ENCODE measurements at regions of chr18 and their contacts with region 1.

Region 1: GRCh38 chr18:62729487-62730386 is 14.4 kb downstream of the PHLPP1 start:
- DNase-seq: no peak
- ATAC-seq: no peak
- H3K4me3 ChIP-seq: no peak overlapping the region
- H3K27ac ChIP-seq: no peak overlapping the region
- H3K4me1 ChIP-seq: no peaks in the 10 kb centered on the region
- H3K27me3 ChIP-seq: no peaks in the 10 kb centered on the region
- CTCF ChIP-seq: no peak

Region 2: DNA sequence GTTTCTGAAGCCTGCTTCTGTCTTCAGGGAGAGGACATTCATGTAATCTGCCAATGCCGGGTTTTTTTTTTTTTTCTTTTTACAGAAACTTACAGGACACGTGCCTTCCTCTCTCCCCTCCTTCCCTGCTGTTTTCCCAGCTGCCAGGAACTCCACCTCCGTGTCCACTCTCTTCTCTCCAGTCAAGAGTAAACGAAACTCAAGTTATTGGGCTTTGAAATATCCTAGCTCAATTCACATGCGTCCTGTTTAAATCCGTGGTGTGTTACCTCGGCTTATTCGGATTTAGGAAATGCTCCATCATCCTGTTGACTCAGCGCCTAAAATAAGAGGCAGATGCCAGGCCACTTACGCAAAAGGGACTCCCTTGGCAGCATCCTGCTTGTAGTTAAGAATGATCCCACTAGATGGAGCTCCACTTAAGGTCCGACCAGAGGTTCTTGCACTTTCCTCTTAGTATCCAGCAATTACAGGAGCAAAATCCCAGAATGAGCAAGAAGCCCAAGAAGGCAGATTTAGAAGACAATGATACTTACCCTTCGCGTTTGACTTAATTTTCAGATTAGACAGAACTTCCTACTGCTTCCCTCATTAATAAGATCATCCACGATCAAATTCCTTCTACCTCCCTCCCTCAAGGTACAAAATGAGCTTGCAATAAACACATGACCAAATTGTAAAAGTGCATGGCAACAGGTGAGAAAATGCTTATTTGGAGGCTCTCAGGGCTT is 304.1 kb before region 1 on chr18:
- intact Hi-C with region 1: no loop called
- DNase-seq: peak in 4 of 6 donors; percentile 47 to 89 (median 76)
- ATAC-seq: peak; percentile 88 to 96 (median 96)
- H3K4me3 ChIP-seq: peak overlapping the region in 2 of 4 donors; percentile 5 to 33
- H3K27ac ChIP-seq: peak overlapping the region in 2 of 4 donors; percentile 59 to 61
- H3K4me1 ChIP-seq: peaks cover 0 to 15% (median 0%) of the 10 kb centered on the region in 3 donors
- H3K27me3 ChIP-seq: no peaks in the 10 kb centered on the region
- CTCF ChIP-seq: peak; percentile 65 to 83 (median 72)

Region 3: DNA sequence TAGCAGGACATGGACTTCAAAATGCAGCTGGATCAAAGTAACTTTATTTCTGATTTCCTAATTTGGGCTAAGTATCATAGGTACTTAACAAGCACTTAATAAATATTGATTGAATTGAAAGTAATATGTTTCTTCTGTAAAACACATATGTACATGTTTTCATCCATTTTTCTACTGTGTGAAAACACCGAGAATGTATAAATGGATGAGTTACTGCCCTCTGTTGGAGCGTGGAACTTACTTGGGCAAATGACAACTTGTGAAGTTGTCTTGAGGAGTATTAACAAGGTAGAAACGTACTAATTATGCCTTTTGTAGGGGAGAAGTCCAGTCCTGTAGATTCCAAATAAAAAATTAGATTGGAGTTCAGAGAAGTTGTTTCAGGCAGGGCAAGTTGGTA is 72.8 kb after region 1 on chr18:
- intact Hi-C with region 1: loop called in 1 of 3 experiments (anchors 10 kb)
- DNase-seq: no peak
- ATAC-seq: peak in 3 of 4 donors; percentile 55 to 85 (median 74)
- H3K4me3 ChIP-seq: no peak overlapping the region
- H3K27ac ChIP-seq: no peak overlapping the region
- H3K4me1 ChIP-seq: peaks cover 0 to 7% (median 0%) of the 10 kb centered on the region in 3 donors
- H3K27me3 ChIP-seq: no peaks in the 10 kb centered on the region
- CTCF ChIP-seq: no peak

Region 4: DNA sequence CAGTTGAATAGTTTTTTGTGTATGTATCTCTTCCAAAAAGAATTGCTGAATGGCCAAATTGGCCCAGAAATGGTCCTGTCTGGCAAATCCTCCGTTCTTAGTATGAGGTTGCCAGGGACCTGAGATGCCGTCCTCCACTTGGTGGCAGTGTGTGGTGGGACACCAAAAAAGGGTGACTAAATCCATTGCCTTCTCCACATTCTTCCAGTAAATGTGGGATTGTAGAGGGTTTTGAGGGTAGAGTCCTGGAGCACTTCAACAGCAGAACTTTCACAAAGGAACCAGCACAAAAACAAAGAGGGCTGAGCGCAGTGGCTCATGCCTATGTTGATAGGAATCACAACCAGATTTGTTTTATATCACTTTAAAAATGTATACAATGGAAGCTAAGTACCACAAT is 389.9 kb after region 1 on chr18:
- intact Hi-C with region 1: no loop called
- DNase-seq: no peak
- ATAC-seq: peak in 3 of 4 donors; percentile 60 to 67 (median 62)
- H3K4me3 ChIP-seq: no peak overlapping the region
- H3K27ac ChIP-seq: no peak overlapping the region
- H3K4me1 ChIP-seq: peaks cover 0 to 2% (median 0%) of the 10 kb centered on the region in 3 donors
- H3K27me3 ChIP-seq: no peaks in the 10 kb centered on the region
- CTCF ChIP-seq: peak in 1 of 4 donors; percentile 11

Measured in pancreas (tissue), 10 donors.